Activated CD8-positive, alpha-beta T cell treated with anti-CD3 and anti-CD28 coated beads, Interleukin-2, amount 10 ng/mL, durations not matched to agents 7 days and 5 days (primary cell): ENCODE measurements at regions of chr1 and their contacts with region 1.

Region 1: DNA sequence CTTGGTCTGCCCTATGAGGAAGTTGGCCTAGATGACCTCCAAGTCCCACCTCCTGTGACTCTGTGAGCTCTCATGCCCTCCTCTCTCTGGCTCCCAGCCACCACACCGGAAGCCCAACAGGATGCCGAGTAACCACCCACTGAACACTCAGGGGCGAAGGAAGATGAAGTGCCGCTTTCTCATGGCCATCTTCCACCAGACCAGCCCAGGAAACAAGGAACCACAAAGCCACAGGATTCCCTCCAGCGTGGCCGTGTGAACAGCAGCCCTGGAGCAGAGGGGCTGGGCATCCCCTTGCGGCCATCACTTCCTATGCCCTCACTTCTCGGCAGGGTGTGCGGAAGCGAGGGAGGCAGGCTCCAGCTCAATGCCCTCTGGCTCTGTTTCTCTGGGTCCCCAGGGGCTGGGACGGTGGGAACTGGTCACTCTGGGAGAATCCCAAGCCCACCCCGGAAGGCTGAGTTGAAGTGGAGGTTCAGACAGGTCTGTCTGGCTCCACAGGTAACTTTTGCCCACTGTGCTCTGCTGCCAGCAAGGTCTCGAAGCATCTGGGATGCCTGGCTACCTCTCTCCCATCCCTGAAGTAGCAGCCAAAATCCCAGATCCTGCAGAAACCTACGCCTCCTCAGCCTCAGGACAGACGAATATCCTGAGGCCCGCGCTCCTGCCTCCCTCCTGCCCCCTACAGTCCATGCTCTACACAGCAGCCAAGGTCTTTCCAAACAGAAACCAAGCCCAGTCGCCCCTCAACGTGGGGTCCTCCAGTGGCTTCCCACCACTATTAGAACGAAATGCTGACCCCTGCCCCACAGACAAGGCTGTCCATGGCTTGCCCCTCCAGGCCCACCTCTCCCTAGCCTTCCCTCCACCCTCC is 44.2 kb upstream of the ECE1 start:
- DNase-seq: peak; percentile 92
- ATAC-seq: peak; percentile 92
- H3K4me3 Mint-ChIP-seq: peak overlapping the region; percentile 75
- H3K27ac Mint-ChIP-seq: peak overlapping the region; percentile 89
- H3K4me1 Mint-ChIP-seq: peaks cover 86% of the 10 kb centered on the region
- H3K27me3 Mint-ChIP-seq: no peaks in the 10 kb centered on the region

Region 2: DNA sequence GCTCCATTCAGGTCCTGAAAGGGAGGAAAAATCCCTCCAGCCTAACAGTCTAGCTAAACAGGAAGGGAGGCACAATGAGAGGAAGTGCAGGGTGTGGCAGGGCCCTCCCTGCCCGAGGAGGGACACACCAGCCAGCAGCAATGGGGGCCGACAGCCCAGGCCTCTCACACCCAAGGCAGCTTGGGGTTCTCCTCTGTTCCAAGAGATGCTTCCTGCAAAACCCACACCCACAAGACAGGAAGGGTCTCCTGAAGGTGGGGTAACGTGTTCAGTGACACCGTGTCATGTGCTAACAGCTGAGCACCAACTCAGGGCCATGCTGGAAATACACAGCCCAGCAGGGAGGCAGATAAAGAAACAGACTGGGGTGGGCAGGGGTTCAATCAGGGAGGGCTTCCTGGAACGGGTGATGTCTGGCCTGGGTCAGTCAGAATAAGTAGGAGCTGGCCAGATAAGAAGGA is 54.4 kb before region 1 on chr1:
- CTCF ChIA-PET with region 1: interaction called, 11 read pairs
- POLR2A ChIA-PET with region 1: no interaction called
- DNase-seq: peak; percentile 44
- ATAC-seq: peak; percentile 76
- H3K4me3 Mint-ChIP-seq: peak overlapping the region; percentile 49
- H3K27ac Mint-ChIP-seq: peak overlapping the region; percentile 94
- H3K4me1 Mint-ChIP-seq: peaks cover 48% of the 10 kb centered on the region
- H3K27me3 Mint-ChIP-seq: no peaks in the 10 kb centered on the region

Region 3: DNA sequence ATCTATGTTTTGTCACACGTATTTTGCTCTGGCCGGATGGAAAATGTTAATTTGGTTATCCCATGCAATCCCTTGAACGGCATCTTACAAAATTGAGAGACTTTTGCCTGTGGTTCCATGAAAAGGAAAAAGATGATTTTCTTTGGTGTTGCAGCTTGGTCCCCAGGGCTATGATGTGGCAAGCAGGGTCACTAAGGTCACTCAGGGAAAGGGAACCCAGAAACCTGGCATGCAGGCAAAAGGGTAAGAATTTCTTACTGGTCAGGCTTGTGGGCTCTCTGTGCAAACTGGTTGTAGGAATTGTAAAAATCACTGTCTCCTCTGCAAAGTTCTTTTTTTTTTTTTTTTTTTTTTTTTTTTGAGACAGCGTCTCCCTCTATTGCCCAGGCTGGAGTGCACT is 57.0 kb after region 1 on chr1:
- CTCF ChIA-PET with region 1: no interaction called
- POLR2A ChIA-PET with region 1: no interaction called
- DNase-seq: no peak
- ATAC-seq: no peak
- H3K4me3 Mint-ChIP-seq: no peak overlapping the region
- H3K27ac Mint-ChIP-seq: no peak overlapping the region
- H3K4me1 Mint-ChIP-seq: no peaks in the 10 kb centered on the region
- H3K27me3 Mint-ChIP-seq: peaks cover 15% of the 10 kb centered on the region